BJ (cell line): ENCODE measurements at regions of chr4 and their contacts with region 1.

Region 1: DNA sequence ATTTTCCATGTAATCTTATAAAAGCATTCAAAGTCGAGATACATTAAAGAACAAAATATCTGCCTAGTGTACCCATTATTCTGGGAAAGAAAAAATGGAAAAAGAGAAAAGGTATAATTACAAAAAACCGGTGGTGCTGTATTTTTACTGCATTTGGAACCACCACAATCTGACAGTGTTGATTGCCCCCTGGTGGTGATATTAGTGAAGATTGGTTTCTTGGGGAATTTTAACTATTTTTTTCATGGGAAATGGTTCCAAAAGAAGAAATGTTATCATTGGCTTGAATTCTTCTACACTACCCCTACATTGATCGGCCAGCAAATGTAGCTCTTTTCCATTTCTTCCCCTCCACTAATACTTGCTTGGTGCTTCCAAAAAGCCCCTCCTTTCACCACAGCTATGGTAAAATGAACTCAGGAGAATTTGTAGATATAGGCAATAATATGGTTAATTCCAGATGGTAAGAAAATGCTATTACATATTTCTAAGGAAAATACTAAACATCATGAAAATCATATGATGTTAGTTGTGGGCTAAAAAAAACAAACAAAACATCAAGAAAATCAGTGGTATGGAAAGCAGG is 50.0 kb downstream of the COX18 start:
- DNase-seq: no peak
- H3K4me3 ChIP-seq: no peak overlapping the region
- H3K27me3 ChIP-seq: peaks cover 2% of the 10 kb centered on the region; the same call in 1 of the 2 replicates
- CTCF ChIP-seq: peak; percentile 53

Region 2: GRCh38 chr4:72295966-72296557 is 723.5 kb before region 1 on chr4:
- CTCF ChIA-PET with region 1: interaction called, 13 read pairs
- POLR2A ChIA-PET with region 1: no interaction called
- DNase-seq: no peak
- H3K4me3 ChIP-seq: no peak overlapping the region
- H3K27me3 ChIP-seq: no peaks in the 10 kb centered on the region
- CTCF ChIP-seq: peak; percentile 67

Region 3: DNA sequence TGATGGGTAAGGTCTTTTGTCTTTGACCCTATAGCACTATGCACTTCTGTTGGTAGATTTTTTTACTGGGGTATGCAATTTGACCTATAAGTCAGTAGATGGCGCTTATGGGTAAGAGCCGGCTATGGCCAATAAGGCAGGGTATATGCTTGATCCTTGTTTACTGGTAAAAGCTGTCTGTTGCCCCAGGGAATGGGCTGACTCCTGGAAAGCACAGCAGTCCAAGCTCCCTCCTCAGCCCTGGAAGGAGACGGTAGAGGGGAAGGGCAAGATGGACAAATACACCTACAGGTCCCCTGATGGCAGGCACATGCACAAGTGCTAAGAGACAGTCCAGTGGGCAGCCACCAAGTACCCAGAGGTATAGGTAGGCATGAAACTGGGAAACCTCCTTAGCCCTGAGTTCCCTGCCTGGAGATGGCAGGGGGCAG is 514.2 kb before region 1 on chr4:
- CTCF ChIA-PET with region 1: interaction called, 66 read pairs
- POLR2A ChIA-PET with region 1: no interaction called
- DNase-seq: no peak
- H3K4me3 ChIP-seq: no peak overlapping the region
- H3K27me3 ChIP-seq: no peaks in the 10 kb centered on the region
- CTCF ChIP-seq: peak; percentile 86

Region 4: DNA sequence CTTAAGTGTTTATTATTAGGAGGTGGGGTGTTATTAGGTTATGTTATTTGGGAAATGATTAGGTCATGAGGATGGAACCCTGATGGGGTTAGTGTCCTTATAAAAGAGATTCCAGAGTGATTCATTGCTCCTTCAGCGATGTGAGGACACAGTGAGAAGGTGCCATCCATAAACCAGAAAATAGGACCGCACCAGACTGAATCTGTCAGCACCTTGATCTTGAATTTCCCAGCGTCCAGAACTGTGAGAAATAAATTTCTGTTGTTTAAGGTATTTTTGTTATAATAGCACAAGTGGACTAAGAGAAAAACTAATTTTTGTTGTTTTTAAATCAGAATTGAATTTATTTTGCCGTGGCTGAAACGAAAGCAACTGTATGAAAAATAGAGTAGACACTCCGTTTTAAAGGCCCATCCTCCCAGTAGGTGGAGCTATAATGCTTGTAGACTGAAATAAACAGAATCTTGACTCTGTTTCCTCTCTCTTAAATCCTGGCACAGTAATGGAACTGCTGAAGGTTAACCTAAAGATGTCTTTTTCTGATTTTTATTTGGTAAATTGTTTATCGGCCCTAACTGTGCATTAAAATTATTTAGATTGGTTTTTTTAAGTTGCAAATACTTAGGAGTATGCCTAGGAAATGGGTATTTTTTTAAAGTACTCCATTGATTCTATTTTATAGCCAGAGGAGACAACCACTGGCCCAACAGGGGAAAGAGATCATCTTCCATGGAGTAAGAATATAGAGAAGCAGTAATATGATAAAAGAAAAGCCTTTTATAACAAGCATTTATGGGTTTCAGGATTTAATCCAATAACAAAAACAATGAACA is 317.4 kb before region 1 on chr4:
- CTCF ChIA-PET with region 1: interaction called, 12 read pairs
- POLR2A ChIA-PET with region 1: no interaction called
- DNase-seq: peak; percentile 9
- H3K4me3 ChIP-seq: peak overlapping the region; percentile 45
- H3K27me3 ChIP-seq: no peaks in the 10 kb centered on the region
- CTCF ChIP-seq: peak; percentile 66

Region 5: DNA sequence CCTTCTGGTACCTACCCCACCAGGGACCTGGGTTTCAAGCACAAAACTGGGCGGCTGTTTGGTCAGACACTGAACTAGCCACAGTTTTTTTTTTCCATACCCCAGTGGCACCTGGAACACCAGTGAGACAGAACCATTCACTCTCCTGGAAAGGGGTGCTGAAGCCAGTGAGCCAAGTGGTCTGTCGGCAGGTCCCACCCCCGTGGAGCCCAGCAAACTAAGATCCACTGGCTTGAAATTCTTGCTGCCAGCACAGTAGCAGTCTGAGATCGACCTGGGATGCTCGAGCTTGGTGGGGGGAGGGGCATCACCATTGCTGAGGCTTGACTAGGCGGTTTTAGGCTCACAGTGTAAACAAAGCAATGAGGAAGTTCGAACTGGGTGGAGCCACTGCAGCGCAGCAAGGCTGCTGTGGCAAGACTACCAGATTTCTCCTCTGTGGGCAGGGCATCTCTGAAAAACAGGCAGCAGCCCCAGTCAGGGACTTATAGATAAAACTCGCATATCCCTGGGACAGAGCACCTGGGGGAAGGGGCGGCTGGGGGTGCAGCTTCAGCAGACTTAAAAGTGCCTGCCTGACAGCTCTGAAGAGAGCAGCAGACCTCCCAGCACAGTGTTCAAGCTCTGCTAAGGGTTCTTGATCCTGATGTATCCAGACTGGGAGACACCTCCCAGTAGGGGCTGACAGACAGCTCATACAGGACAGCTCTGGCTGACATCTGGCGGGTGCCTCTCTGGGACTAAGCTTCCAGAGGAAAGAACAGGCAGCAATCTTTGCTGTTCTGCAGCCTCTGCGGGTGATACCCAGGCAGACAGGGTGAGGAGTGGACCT is 173.1 kb before region 1 on chr4:
- CTCF ChIA-PET with region 1: no interaction called
- POLR2A ChIA-PET with region 1: interaction called, 15 read pairs
- DNase-seq: no peak
- H3K4me3 ChIP-seq: no peak overlapping the region
- H3K27me3 ChIP-seq: no peaks in the 10 kb centered on the region
- CTCF ChIP-seq: no peak